ENCODE measurements at regions of chr7 and their contacts with region 1.

Region 1: DNA sequence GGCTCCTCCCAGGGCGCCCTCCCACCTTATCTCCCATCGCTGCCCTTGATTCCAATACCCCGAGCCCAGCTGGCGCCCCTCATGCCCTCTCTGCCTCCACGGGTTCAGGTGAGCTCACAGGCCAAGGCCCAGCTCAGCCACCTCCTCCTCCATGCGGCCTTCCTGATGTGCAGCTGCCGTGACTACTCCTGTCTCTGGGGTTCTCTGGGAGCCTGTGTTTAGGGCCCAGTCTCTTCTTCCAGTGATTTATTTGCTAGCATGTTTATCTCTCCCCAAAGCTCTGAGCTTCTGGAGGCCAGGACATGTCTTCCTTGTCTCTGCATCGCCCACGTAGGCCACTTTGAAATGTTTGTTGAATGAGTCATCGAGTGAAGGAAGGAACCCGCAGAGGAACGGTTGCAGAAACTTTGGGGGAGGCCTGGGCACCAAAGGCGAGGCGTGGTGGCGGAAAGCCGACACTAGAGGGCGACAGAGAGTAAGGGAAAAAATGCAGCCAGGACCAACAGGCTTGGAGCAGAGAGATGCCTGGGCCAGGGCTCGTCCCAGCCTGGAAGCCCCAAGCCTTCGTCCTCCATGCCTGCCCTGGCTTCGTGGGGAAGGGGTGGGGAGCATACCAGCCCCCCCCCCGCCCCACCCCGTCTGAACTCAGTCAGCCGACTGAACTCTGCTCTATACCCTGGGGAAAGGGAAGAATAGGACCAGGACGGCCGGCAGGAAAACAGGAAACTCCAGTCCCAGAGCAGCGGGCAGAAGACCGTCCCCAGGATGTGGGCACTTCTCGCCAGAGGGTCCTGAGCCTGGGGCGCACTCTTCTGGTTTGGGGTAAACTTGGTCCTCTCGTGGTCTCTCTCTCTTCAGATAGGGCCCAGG is 10.9 kb upstream of the HSPB1 start:
- DNase-seq: peak; percentile 97
- H3K4me3 Mint-ChIP-seq: peak overlapping the region; percentile 38
- H3K27ac Mint-ChIP-seq: peak overlapping the region; percentile 68
- H3K4me1 Mint-ChIP-seq: peaks cover 9% of the 10 kb centered on the region
- H3K27me3 Mint-ChIP-seq: no peaks in the 10 kb centered on the region

Region 2: GRCh38 chr7:76272851-76273497 is 18.6 kb before region 1 on chr7:
- CTCF ChIA-PET with region 1: interaction called, 10 read pairs
- intact Hi-C with region 1: no loop called
- DNase-seq: no peak
- H3K4me3 Mint-ChIP-seq: no peak overlapping the region
- H3K27ac Mint-ChIP-seq: no peak overlapping the region
- H3K4me1 Mint-ChIP-seq: peaks cover 16% of the 10 kb centered on the region
- H3K27me3 Mint-ChIP-seq: peaks cover 19% of the 10 kb centered on the region

Region 3: DNA sequence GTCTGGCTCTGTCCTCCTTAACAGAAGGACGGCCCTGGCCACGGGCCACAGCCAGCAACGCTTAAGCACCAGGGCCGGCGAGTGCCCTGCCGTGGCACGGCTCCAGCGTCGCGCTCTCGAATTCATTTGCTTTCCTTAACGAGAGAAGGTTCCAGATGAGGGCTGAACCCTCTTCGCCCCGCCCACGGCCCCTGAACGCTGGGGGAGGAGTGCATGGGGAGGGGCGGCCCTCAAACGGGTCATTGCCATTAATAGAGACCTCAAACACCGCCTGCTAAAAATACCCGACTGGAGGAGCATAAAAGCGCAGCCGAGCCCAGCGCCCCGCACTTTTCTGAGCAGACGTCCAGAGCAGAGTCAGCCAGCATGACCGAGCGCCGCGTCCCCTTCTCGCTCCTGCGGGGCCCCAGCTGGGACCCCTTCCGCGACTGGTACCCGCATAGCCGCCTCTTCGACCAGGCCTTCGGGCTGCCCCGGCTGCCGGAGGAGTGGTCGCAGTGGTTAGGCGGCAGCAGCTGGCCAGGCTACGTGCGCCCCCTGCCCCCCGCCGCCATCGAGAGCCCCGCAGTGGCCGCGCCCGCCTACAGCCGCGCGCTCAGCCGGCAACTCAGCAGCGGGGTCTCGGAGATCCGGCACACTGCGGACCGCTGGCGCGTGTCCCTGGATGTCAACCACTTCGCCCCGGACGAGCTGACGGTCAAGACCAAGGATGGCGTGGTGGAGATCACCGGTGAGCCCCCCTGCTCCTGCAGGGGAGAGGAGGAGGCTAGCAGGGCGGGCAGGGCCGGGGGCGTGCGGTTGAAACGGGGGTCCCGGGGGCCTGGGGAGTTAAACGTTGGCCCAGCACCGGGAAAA is 11.0 kb after region 1 on chr7 and contains the start of gene HSPB1:
- CTCF ChIA-PET with region 1: interaction called, 57 read pairs
- intact Hi-C with region 1: loop called (anchors 1 kb)
- DNase-seq: peak; percentile 64
- H3K4me3 Mint-ChIP-seq: peak within 1 kb of the TSS; percentile 87
- H3K27ac Mint-ChIP-seq: peak within 1 kb of the TSS; percentile 86
- H3K4me1 Mint-ChIP-seq: peaks cover 16% of the 10 kb centered on the region
- H3K27me3 Mint-ChIP-seq: peaks cover 6% of the 10 kb centered on the region
- total RNA-seq, gene HSPB1: 106 to 115 TPM